Gastrocnemius medialis (tissue), 4 donors: ENCODE measurements at regions of chr2 and their contacts with region 1.

Region 1: DNA sequence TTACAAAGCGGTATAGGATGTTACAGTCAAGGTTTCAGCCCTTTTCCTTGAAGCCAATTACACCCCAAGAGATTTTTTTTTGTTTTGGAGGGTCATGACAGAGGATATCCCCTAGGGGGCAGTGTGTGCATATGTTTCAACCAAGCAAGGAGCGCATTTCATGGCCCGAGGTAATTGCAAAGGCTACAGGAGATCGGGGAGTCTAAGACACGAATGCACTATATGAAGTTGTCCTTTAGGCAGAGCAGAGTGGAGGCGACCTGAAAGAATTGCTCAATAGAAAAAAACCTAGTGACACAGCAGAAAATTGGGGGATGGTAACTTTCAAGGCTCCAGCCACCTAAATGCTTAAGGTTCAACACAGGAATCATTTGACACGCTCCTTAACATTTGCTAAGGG is 219.8 kb upstream of the PARD3B start:
- DNase-seq: peak; percentile 11 to 39
- ATAC-seq: peak; percentile 78 to 81
- H3K4me3 ChIP-seq: peak overlapping the region in 1 of 4 donors; percentile 20
- H3K27ac ChIP-seq: no peak overlapping the region
- H3K4me1 ChIP-seq: peaks cover 0 to 12% of the 10 kb centered on the region in 2 donors
- H3K27me3 ChIP-seq: no peaks in the 10 kb centered on the region
- CTCF ChIP-seq: peak; percentile 72 to 87 (median 78)
- POLR2A ChIP-seq: no peak

Region 2: GRCh38 chr2:204691911-204692510 is 366.5 kb after region 1 on chr2:
- in situ Hi-C with region 1: loop called (anchors 5 to 25 kb)
- intact Hi-C with region 1: loop called (anchors 1 kb)
- DNase-seq: peak; percentile 35 to 53
- ATAC-seq: peak; percentile 97 to 99
- H3K4me3 ChIP-seq: no peak overlapping the region
- H3K27ac ChIP-seq: no peak overlapping the region
- H3K4me1 ChIP-seq: peaks cover 0 to 4% of the 10 kb centered on the region in 2 donors
- H3K27me3 ChIP-seq: no peaks in the 10 kb centered on the region
- CTCF ChIP-seq: peak; percentile 33 to 80 (median 73)
- POLR2A ChIP-seq: no peak

Region 3: DNA sequence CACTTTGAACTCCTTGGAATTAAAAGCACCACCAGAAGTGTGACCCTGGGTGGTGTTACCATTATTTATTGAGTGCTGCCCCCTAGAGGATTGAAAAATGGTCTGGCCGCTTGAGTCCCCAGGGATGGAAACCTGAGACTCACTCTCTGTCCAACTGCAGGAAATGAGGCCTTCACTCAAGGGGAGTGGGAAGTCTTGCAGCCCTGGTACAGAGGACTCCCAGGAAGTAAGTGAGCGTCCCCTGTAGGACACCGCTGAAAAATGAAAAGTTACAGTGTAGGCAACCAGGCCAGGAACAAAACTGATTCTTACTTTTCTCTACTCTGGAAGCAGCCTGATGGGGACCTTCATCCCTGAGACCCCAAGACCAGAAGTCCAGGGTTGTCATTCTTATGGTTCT is 1354.6 kb after region 1 on chr2:
- in situ Hi-C with region 1: loop called in 3 of 4 experiments (anchors 5 to 25 kb)
- intact Hi-C with region 1: loop called (anchors 10 kb)
- DNase-seq: no peak
- ATAC-seq: peak in 1 of 2 donors; percentile 47
- H3K4me3 ChIP-seq: no peak overlapping the region
- H3K27ac ChIP-seq: no peak overlapping the region
- H3K4me1 ChIP-seq: peaks cover 13% of the 10 kb centered on the region in 2 donors
- H3K27me3 ChIP-seq: peaks cover 27 to 48% (median 34%) of the 10 kb centered on the region in 3 donors
- CTCF ChIP-seq: peak; percentile 21 to 53 (median 37)
- POLR2A ChIP-seq: no peak

Region 4: DNA sequence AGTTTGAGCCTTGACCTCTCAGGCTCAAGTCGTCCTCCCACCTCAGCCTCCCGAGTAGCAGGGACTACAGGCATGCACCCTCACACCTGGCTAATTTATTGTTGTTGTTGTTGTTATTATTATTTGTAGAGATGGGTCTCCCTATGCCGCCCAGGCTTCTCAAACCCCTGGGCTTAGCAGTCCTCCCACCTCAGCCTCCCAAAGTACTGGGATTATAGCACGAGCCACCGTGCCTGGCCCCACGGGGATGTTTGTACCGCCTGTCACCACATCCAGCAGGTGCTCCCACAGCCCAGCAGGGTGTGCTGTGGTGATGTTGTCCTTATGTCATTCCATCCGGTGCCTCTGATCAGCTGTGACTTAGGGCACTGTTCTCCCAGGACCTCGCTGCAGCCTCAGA is 1578.2 kb after region 1 on chr2:
- in situ Hi-C with region 1: loop called in 1 of 4 experiments (anchors 25 kb)
- intact Hi-C with region 1: no loop called
- DNase-seq: no peak
- ATAC-seq: no peak
- H3K4me3 ChIP-seq: no peak overlapping the region
- H3K27ac ChIP-seq: no peak overlapping the region
- H3K4me1 ChIP-seq: no peaks in the 10 kb centered on the region
- H3K27me3 ChIP-seq: no peaks in the 10 kb centered on the region
- CTCF ChIP-seq: no peak
- POLR2A ChIP-seq: no peak

Region 5: GRCh38 chr2:205947621-205948495 is 1622.4 kb after region 1 on chr2:
- in situ Hi-C with region 1: loop called in 1 of 4 experiments (anchors 25 kb)
- intact Hi-C with region 1: loop called (anchors 10 kb)
- DNase-seq: peak; percentile 11 to 50
- ATAC-seq: peak; percentile 91 to 92
- H3K4me3 ChIP-seq: peak overlapping the region in 1 of 4 donors; percentile 9
- H3K27ac ChIP-seq: peak overlapping the region in 1 of 4 donors; percentile 28
- H3K4me1 ChIP-seq: no peaks in the 10 kb centered on the region
- H3K27me3 ChIP-seq: no peaks in the 10 kb centered on the region
- CTCF ChIP-seq: peak; percentile 48 to 91 (median 70)
- POLR2A ChIP-seq: no peak